ENCODE measurements at regions of chr2 and their contacts with region 1.

Region 1: GRCh38 chr2:173752152-173752551 is 213.0 kb downstream of the SP3 start:
- DNase-seq: no peak
- ATAC-seq: no peak
- H3K4me3 ChIP-seq: no peak overlapping the region
- H3K27ac ChIP-seq: no peak overlapping the region
- H3K4me1 ChIP-seq: peaks cover 0 to 15% (median 7%) of the 10 kb centered on the region in 9 donors
- H3K27me3 ChIP-seq: peaks cover 0 to 9% (median 0%) of the 10 kb centered on the region in 7 donors
- CTCF ChIP-seq: peak in 3 of 9 donors; percentile 14 to 30 (median 21)

Region 2: GRCh38 chr2:174078275-174078674 is 326.1 kb after region 1 on chr2:
- intact Hi-C with region 1: loop called in 1 of 10 experiments (anchors 10 kb)
- DNase-seq: no peak
- ATAC-seq: no peak
- H3K4me3 ChIP-seq: no peak overlapping the region
- H3K27ac ChIP-seq: no peak overlapping the region
- H3K4me1 ChIP-seq: no peaks in the 10 kb centered on the region
- H3K27me3 ChIP-seq: no peaks in the 10 kb centered on the region
- CTCF ChIP-seq: peak in 8 of 9 donors; percentile 12 to 63 (median 50)

Measured in heart right ventricle (tissue), 16 donors.